ENCODE measurements at regions of chr19 and their contacts with region 1.

Region 1: GRCh38 chr19:32570081-32570785 is 10.8 kb upstream of the PDCD5 start:
- DNase-seq: no peak
- ATAC-seq: no peak
- H3K4me3 Mint-ChIP-seq: no peak overlapping the region
- H3K27ac Mint-ChIP-seq: no peak overlapping the region
- H3K4me1 Mint-ChIP-seq: no peaks in the 10 kb centered on the region
- H3K27me3 Mint-ChIP-seq: peaks cover 18% of the 10 kb centered on the region
- CTCF ChIP-seq: no peak

Region 2: DNA sequence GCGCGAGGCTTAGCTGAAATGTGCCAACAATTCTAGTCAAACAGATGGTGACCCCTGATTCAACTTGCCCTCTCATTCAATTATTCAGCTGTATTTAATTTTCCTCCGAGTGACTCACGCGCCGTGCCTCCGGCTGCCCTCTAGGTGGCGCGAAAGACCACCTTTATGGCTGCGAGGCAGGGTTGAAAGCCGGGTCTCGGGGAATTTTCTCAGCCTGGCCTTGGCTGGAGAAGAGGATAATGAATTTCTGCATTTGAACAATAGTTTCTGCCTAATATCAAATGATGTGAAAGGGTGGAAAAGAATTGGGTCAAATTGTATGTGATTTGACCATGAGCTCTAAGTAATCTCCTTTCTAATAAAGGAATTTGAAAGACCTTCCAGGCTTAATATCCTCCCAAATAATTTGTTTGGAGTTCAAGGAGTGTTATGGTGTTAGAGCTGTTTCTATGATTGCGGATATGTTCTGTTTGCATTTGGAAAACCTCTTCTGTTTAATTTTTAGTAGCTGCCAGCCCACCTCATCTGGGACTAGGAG is 1887.2 kb before region 1 on chr19:
- CTCF ChIA-PET with region 1: no interaction called
- POLR2A ChIA-PET with region 1: no interaction called
- intact Hi-C with region 1: loop called (anchors 5 kb)
- DNase-seq: no peak
- ATAC-seq: no peak
- H3K4me3 Mint-ChIP-seq: no peak overlapping the region
- H3K27ac Mint-ChIP-seq: no peak overlapping the region
- H3K4me1 Mint-ChIP-seq: no peaks in the 10 kb centered on the region
- H3K27me3 Mint-ChIP-seq: peaks cover 4% of the 10 kb centered on the region
- CTCF ChIP-seq: no peak

Region 3: DNA sequence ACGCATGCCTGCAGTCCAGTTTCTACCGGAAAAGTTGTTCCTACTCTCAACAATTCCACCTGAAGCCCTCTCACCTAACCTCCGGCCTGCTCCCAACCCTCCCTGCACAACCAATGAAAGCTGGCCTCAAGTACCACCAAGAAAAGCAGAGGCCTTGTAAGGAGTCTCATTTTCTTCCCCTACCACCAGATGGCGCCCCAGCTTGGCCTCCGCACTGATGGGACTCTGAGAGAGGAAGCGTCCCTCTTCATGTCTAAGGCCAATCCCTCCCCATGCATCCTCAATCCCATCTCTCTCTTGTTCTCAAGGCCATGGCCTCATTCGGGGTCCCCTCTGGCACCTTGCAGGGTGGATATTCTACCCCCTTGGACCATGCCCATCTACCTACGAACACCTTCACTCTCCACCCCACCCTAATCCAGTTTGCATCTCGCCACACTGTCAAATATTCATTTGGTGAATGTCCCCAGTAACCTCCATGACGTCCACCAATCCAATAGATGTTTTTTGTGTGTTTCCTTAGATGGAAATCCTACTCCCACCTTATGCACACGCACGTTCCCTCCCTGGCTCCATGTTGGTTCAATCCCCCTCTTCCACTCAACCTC is 1785.3 kb before region 1 on chr19:
- CTCF ChIA-PET with region 1: no interaction called
- POLR2A ChIA-PET with region 1: no interaction called
- intact Hi-C with region 1: loop called (anchors 10 kb)
- DNase-seq: no peak
- ATAC-seq: no peak
- H3K4me3 Mint-ChIP-seq: no peak overlapping the region
- H3K27ac Mint-ChIP-seq: no peak overlapping the region
- H3K4me1 Mint-ChIP-seq: no peaks in the 10 kb centered on the region
- H3K27me3 Mint-ChIP-seq: no peaks in the 10 kb centered on the region
- CTCF ChIP-seq: no peak

Region 4: DNA sequence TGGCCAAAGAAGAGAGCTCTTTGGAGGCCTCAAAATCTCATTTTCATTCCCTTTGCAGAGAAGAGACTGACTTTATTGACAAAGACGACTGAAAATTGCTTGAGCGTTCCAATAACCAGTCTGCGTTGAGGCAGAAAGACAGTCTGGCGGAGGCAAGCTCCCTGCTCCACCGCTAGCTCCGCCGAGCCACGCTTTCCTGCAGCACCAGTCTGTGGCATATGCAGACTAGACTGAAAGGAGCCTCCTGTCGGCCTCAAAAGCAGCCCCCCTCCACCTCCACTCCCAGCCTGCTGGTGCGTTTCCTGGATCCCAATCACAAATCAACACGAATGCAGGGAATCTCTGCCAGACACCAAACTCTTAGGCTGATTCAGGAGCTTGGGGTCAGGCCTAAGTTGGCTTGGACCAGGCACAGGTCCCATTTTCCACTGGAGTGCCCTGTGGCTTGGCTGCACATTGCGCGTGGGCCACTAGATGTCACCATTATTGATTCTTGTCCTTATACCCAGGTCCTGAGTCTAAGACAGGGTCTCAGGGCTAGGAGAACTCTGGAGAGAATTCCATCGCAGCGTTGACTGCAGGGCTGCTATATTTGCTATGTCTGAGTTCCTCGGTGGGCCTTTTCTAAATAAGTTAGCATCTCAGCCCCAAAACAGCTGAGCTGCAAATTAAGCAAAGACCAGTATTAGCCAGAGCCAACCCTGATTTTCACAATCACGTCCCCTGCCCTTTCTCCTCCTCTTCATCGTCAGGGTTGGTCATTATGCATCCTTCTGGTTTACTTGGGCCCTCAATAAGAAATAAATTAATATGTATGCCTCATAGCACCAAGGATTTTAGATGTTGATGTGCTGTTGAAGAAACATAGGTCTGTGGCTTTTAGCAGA is 230.0 kb before region 1 on chr19:
- CTCF ChIA-PET with region 1: no interaction called
- POLR2A ChIA-PET with region 1: no interaction called
- intact Hi-C with region 1: loop called (anchors 1 kb)
- DNase-seq: peak; percentile 23
- ATAC-seq: peak; percentile 90
- H3K4me3 Mint-ChIP-seq: no peak overlapping the region
- H3K27ac Mint-ChIP-seq: no peak overlapping the region
- H3K4me1 Mint-ChIP-seq: no peaks in the 10 kb centered on the region
- H3K27me3 Mint-ChIP-seq: no peaks in the 10 kb centered on the region
- CTCF ChIP-seq: no peak

Region 5: GRCh38 chr19:32866564-32867265 is 296.5 kb after region 1 on chr19:
- CTCF ChIA-PET with region 1: no interaction called
- POLR2A ChIA-PET with region 1: no interaction called
- intact Hi-C with region 1: no loop called
- DNase-seq: no peak
- ATAC-seq: no peak
- H3K4me3 Mint-ChIP-seq: no peak overlapping the region
- H3K27ac Mint-ChIP-seq: no peak overlapping the region
- H3K4me1 Mint-ChIP-seq: no peaks in the 10 kb centered on the region
- H3K27me3 Mint-ChIP-seq: no peaks in the 10 kb centered on the region
- CTCF ChIP-seq: no peak